ENCODE measurements at regions of chr13 and their contacts with region 1.

Region 1: DNA sequence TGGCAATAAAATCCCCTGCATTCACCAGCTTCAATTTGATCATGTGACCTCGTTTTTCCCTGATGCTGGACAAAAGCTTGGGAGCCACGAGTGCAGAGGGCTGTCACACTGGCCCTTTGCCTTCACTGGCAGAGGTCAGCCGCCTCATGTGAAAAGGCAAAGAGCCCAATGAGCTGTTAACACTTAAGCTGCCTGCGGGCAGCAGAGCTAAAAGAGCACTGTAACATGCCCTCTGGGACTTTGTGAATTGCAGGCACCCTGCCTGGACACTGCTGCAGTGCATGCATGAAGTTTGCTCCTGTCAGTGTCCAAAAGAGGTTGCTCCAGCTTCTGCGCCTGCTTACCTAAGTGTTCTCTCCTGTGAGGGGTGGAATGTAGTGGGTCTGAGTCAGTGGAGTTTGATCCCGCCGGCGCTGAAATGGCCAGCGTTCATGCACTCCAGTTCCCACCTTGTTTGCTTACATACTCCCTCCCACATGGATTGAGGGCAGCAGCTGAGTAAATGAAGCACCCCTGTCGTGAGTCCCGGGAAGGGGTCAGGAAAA is 193.7 kb downstream of the RFC3 start:
- DNase-seq: peak; percentile 96
- ATAC-seq: peak; percentile 100
- H3K4me3 ChIP-seq: peak overlapping the region in 1 of 3 experiments; percentile 42; a peak in 3 of 6 replicates
- H3K27ac ChIP-seq: peak overlapping the region; percentile 84
- H3K4me1 ChIP-seq: peaks cover 59% of the 10 kb centered on the region
- H3K27me3 ChIP-seq: no peaks in the 10 kb centered on the region
- CTCF ChIP-seq: 0 out of 2 replicates have a peak, but pooled peaks have one; percentile 13
- EP300 ChIP-seq: peak; percentile 61 to 85
- POLR2A ChIP-seq: peak; percentile 63 to 67; a peak in 2 of 4 replicates
- RAD21 ChIP-seq: peak; percentile 62; the same call in 1 of the 2 replicates

Region 2: GRCh38 chr13:33751151-33751550 is 260.5 kb before region 1 on chr13:
- CTCF ChIA-PET with region 1: no interaction called
- POLR2A ChIA-PET with region 1: no interaction called
- in situ Hi-C with region 1: no loop called
- intact Hi-C with region 1: no loop called
- DNase-seq: no peak
- ATAC-seq: no peak
- H3K4me3 ChIP-seq: no peak overlapping the region
- H3K27ac ChIP-seq: no peak overlapping the region
- H3K4me1 ChIP-seq: no peaks in the 10 kb centered on the region
- H3K27me3 ChIP-seq: no peaks in the 10 kb centered on the region
- CTCF ChIP-seq: no peak
- EP300 ChIP-seq: no peak
- POLR2A ChIP-seq: no peak
- RAD21 ChIP-seq: no peak

Region 3: GRCh38 chr13:33937373-33938098 is 74.1 kb before region 1 on chr13:
- CTCF ChIA-PET with region 1: no interaction called
- POLR2A ChIA-PET with region 1: interaction called, 7 read pairs
- in situ Hi-C with region 1: no loop called
- intact Hi-C with region 1: loop called (anchors 5 kb)
- DNase-seq: peak; percentile 87
- ATAC-seq: peak; percentile 99
- H3K4me3 ChIP-seq: no peak overlapping the region
- H3K27ac ChIP-seq: peak overlapping the region; percentile 59
- H3K4me1 ChIP-seq: peaks cover 33% of the 10 kb centered on the region
- H3K27me3 ChIP-seq: no peaks in the 10 kb centered on the region
- CTCF ChIP-seq: no peak
- EP300 ChIP-seq: no peak; a peak in 1 of 4 replicates
- POLR2A ChIP-seq: no peak
- RAD21 ChIP-seq: no peak

Region 4: DNA sequence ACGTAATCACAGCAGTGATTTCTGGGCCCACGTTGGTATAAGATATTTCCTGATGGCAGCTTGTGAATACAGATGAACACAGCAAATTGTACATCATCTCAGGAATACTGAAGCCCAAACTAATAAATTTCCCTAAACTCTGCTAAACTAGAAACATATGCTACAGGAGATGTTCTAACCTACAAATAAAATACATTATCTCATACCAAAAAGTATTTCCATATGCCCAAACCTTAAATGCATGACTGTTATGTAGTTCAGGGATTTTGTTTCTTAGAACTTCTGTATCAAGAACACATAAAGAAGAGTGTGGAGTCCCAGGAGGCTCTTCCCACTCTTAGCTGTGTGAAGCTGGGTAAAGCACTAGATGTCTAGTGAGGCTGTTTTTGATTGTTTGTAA is 55.3 kb before region 1 on chr13:
- CTCF ChIA-PET with region 1: no interaction called
- POLR2A ChIA-PET with region 1: interaction called, 5 read pairs
- in situ Hi-C with region 1: no loop called
- intact Hi-C with region 1: loop called (anchors 1 kb)
- DNase-seq: no peak
- ATAC-seq: no peak
- H3K4me3 ChIP-seq: no peak overlapping the region
- H3K27ac ChIP-seq: peak overlapping the region; percentile 82
- H3K4me1 ChIP-seq: peaks cover 54% of the 10 kb centered on the region
- H3K27me3 ChIP-seq: no peaks in the 10 kb centered on the region
- CTCF ChIP-seq: no peak
- EP300 ChIP-seq: no peak
- POLR2A ChIP-seq: no peak
- RAD21 ChIP-seq: no peak

Region 5: GRCh38 chr13:34037636-34038540 is 26.3 kb after region 1 on chr13:
- CTCF ChIA-PET with region 1: no interaction called
- POLR2A ChIA-PET with region 1: interaction called, 20 read pairs
- in situ Hi-C with region 1: no loop called
- intact Hi-C with region 1: no loop called
- DNase-seq: no peak
- ATAC-seq: peak; percentile 74
- H3K4me3 ChIP-seq: no peak overlapping the region; a peak in 1 of 6 replicates
- H3K27ac ChIP-seq: peak overlapping the region; percentile 60
- H3K4me1 ChIP-seq: peaks cover 54% of the 10 kb centered on the region
- H3K27me3 ChIP-seq: no peaks in the 10 kb centered on the region
- CTCF ChIP-seq: no peak
- EP300 ChIP-seq: no peak
- POLR2A ChIP-seq: no peak
- RAD21 ChIP-seq: no peak

Measured in HepG2 (cell line).